ENCODE measurements at regions of chr20 and their contacts with region 1.

Region 1: GRCh38 chr20:19995220-19995863 is 21.8 kb upstream of the NAA20 start:
- DNase-seq: no peak
- H3K4me3 ChIP-seq: no peak overlapping the region
- H3K27ac ChIP-seq: no peak overlapping the region
- H3K27me3 ChIP-seq: no peaks in the 10 kb centered on the region
- CTCF ChIP-seq: peak; percentile 78

Region 2: DNA sequence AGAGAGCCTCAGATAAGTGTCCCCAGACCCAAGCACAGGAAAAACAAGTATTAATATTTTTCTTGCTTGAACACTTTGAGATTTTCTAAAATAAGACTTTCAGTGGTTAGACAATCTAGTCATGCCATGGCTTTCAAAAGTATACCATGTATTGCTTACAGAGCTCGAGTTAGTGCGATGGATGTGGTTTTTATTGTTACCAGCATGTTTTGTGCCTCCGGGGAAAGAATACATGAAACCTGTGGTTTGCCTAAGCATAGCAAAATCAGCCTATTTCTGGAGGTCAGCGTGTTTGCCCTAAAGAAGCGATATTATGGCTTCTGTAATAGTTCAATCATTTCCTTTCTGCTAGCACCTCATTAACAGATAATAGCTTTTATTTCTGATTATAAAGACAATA is 215.7 kb before region 1 on chr20:
- CTCF ChIA-PET with region 1: interaction called, 27 read pairs
- POLR2A ChIA-PET with region 1: interaction called, 6 read pairs
- DNase-seq: no peak
- H3K4me3 ChIP-seq: no peak overlapping the region
- H3K27ac ChIP-seq: no peak overlapping the region
- H3K27me3 ChIP-seq: no peaks in the 10 kb centered on the region
- CTCF ChIP-seq: no peak

Region 3: DNA sequence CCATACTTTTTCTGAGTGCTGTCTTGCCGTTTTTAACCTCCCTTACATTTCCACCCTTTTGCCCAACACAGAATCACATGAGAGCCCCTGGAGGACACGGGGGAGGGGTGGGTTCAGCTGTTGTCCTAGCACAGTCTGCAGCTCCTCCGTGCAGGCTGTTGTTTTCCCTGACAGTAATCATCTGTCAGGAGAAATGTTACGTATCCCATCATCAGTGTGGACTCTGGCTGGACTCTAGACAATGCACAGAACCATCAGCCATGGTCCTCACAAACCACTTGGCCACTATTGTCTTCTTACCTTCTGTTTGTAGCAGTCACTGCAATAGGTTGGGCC is 145.2 kb before region 1 on chr20:
- CTCF ChIA-PET with region 1: interaction called, 14 read pairs
- POLR2A ChIA-PET with region 1: no interaction called
- DNase-seq: no peak
- H3K4me3 ChIP-seq: no peak overlapping the region
- H3K27ac ChIP-seq: no peak overlapping the region
- H3K27me3 ChIP-seq: no peaks in the 10 kb centered on the region
- CTCF ChIP-seq: no peak

Region 4: DNA sequence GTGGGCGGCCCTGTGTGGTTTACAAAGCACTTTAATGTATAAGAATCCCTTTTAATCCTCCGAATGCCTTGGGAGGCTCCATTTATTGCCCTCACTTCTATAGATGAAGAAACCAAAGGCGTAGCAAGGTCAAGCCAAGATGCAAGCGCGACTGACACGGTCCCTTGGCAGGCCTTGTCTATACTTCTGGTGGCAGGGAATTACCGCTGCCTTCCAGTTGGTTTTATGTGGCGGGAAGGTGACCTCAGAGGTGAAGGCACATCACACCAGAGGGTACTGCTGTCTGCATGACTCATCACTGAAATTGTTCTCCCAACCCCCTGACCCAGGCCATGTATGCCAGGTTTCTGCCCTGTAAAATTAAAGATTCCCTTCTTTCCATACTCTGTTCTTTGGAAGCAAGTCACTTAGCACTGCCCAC is 14.3 kb before region 1 on chr20:
- CTCF ChIA-PET with region 1: interaction called, 15 read pairs
- POLR2A ChIA-PET with region 1: interaction called, 88 read pairs
- DNase-seq: no peak
- H3K4me3 ChIP-seq: no peak overlapping the region
- H3K27ac ChIP-seq: no peak overlapping the region
- H3K27me3 ChIP-seq: no peaks in the 10 kb centered on the region
- CTCF ChIP-seq: no peak

Region 5: GRCh38 chr20:20017001-20017843 is 21.9 kb after region 1 on chr20 and contains the start of gene NAA20:
- CTCF ChIA-PET with region 1: interaction called, 14 read pairs
- POLR2A ChIA-PET with region 1: interaction called, 4 read pairs
- DNase-seq: peak; percentile 70
- H3K4me3 ChIP-seq: peak within 1 kb of the TSS; percentile 87
- H3K27ac ChIP-seq: peak within 1 kb of the TSS; percentile 21
- H3K27me3 ChIP-seq: no peaks in the 10 kb centered on the region
- CTCF ChIP-seq: peak; percentile 76
- polyA plus RNA-seq, gene NAA20: 59.6 and 85.1 TPM in 2 replicates

Measured in AG04450 (cell line).